ENCODE measurements at regions of chr16 and their contacts with region 1.

Region 1: DNA sequence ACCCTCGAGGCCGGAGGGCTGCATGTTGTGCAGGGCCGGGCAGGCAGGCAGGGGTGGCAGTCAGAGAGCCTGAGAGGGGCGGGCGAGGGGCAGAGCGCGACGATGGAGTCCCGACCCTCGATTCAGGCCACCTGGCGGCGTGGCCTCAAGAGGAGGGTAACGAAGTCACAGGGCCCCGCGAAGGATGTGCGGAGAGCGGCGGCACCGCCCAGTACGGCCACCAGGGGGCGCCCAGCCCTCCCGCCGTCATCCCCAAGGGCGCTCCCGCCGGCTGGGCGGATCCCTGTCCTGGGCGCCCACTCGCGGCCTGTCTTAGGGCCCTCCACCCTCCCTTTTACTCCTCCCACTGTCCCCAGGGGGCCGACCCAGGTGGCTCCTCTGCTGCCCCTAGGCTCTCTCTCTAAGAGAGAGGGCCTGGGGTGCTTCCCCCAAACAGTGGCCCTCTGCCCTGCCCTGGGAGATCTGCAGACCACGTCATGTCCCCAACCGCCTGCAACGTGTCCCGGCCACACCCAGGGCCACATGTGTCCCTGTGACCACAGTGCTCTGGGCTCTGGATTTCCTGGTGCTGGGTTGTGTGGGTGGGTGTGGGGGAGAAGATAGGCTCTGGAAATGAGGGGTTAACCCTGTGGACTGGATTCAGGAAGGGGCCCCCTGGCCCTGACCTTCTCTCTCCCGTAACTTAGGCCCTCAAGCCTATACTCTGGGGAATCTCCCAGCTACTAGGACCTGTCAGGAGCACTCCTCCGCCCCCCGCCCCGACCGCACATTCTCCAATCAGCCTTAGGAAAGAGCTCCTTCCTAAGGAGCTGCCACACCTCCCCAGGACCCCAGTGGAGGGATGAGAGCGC is 5.9 kb downstream of the DPEP2 start:
- DNase-seq: peak; percentile 69
- ATAC-seq: peak; percentile 89
- H3K4me3 ChIP-seq: peak overlapping the region; percentile 44 to 74 (median 67); a peak in 5 of 6 replicates
- H3K27ac ChIP-seq: peak overlapping the region; percentile 22
- H3K4me1 ChIP-seq: peaks cover 37% of the 10 kb centered on the region
- H3K27me3 ChIP-seq: peaks cover 2 to 22% of the 10 kb centered on the region in 2 experiments
- CTCF ChIP-seq: peak; percentile 98
- EP300 ChIP-seq: no peak
- POLR2A ChIP-seq: peak; percentile 25 to 40; a peak in 2 of 4 replicates
- RAD21 ChIP-seq: peak; percentile 97

Region 2: GRCh38 chr16:67800338-67800926 is 193.0 kb before region 1 on chr16:
- CTCF ChIA-PET with region 1: no interaction called
- POLR2A ChIA-PET with region 1: no interaction called
- in situ Hi-C with region 1: no loop called
- intact Hi-C with region 1: no loop called
- DNase-seq: no peak
- ATAC-seq: no peak
- H3K4me3 ChIP-seq: no peak overlapping the region
- H3K27ac ChIP-seq: no peak overlapping the region
- H3K4me1 ChIP-seq: peaks cover 33% of the 10 kb centered on the region
- H3K27me3 ChIP-seq: no peaks in the 10 kb centered on the region
- CTCF ChIP-seq: no peak
- EP300 ChIP-seq: no peak
- POLR2A ChIP-seq: no peak
- RAD21 ChIP-seq: no peak

Region 3: GRCh38 chr16:67929547-67929946 is 63.9 kb before region 1 on chr16:
- CTCF ChIA-PET with region 1: no interaction called
- POLR2A ChIA-PET with region 1: no interaction called
- in situ Hi-C with region 1: no loop called
- intact Hi-C with region 1: no loop called
- DNase-seq: no peak
- ATAC-seq: no peak
- H3K4me3 ChIP-seq: no peak overlapping the region
- H3K27ac ChIP-seq: no peak overlapping the region
- H3K4me1 ChIP-seq: peaks cover 11% of the 10 kb centered on the region
- H3K27me3 ChIP-seq: no peaks in the 10 kb centered on the region
- CTCF ChIP-seq: no peak
- EP300 ChIP-seq: no peak
- POLR2A ChIP-seq: no peak
- RAD21 ChIP-seq: no peak

Region 4: GRCh38 chr16:68022704-68023522 is 29.5 kb after region 1 on chr16 and contains the starts of genes DDX28 and DUS2:
- CTCF ChIA-PET with region 1: interaction called, 3 read pairs
- POLR2A ChIA-PET with region 1: interaction called, 13 read pairs
- in situ Hi-C with region 1: no loop called
- intact Hi-C with region 1: no loop called
- DNase-seq: peak; percentile 88
- ATAC-seq: peak; percentile 88
- H3K4me3 ChIP-seq: peak within 1 kb of the TSS; percentile 92 to 99 (median 92)
- H3K27ac ChIP-seq: peak within 1 kb of the TSS; percentile 83
- H3K4me1 ChIP-seq: peaks cover 24% of the 10 kb centered on the region
- H3K27me3 ChIP-seq: no peaks in the 10 kb centered on the region; a peak in 1 of 5 replicates
- CTCF ChIP-seq: peak; percentile 34; the same call in 1 of the 2 replicates
- EP300 ChIP-seq: peak; percentile 37 to 77; a peak in 2 of 4 replicates
- POLR2A ChIP-seq: peak; percentile 88 to 92
- RAD21 ChIP-seq: peak; percentile 38; the same call in 1 of the 2 replicates
- total RNA-seq, gene DDX28: 16.4 and 18.4 TPM in 2 replicates
- total RNA-seq, gene DUS2: 25.1 and 25.9 TPM in 2 replicates

Region 5: DNA sequence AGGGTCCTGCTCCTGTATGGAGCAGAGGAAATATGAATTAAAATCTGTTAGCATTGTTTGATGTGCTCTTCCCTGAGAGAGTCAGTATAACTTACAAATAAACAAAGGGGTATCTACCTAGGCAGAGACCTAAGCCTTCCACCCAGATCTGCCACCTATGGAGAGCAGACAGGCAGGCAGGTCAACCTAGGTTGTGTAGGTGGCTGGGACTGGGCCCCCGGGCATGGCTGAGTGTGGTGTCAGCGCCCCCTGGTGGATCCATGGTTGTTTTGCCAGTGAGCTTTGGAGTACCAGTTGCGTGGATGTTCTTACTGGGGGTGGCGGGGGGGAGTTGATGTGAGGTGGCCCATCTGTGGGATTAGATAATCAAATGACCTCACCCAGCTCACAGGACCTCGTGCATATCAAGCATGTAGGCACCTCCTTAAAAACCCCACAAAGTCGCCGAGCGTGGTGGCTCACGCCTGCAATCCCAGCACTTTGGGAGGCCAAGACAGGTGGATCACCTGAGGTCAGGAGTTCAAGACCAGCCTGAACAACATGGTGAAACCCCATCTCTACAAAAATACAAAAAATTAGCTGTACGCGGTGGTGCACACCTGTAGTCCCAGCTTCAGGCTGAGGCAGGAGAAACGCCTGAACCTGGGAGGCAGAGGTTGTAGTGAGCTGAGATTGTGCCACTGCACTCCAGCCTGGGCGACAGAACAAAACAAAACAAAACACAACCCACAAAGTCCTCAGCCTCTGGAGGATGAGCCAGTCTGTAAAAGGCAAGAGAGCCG is 47.3 kb after region 1 on chr16:
- CTCF ChIA-PET with region 1: interaction called, 46 read pairs
- POLR2A ChIA-PET with region 1: interaction called, 3 read pairs
- in situ Hi-C with region 1: loop called (anchors 5 kb)
- intact Hi-C with region 1: loop called (anchors 1 kb)
- DNase-seq: peak; percentile 82
- ATAC-seq: peak; percentile 99
- H3K4me3 ChIP-seq: no peak overlapping the region
- H3K27ac ChIP-seq: no peak overlapping the region
- H3K4me1 ChIP-seq: peaks cover 5% of the 10 kb centered on the region; the same call in 1 of the 2 replicates
- H3K27me3 ChIP-seq: no peaks in the 10 kb centered on the region
- CTCF ChIP-seq: peak; percentile 95
- EP300 ChIP-seq: no peak
- POLR2A ChIP-seq: no peak
- RAD21 ChIP-seq: peak; percentile 97

Region 6: DNA sequence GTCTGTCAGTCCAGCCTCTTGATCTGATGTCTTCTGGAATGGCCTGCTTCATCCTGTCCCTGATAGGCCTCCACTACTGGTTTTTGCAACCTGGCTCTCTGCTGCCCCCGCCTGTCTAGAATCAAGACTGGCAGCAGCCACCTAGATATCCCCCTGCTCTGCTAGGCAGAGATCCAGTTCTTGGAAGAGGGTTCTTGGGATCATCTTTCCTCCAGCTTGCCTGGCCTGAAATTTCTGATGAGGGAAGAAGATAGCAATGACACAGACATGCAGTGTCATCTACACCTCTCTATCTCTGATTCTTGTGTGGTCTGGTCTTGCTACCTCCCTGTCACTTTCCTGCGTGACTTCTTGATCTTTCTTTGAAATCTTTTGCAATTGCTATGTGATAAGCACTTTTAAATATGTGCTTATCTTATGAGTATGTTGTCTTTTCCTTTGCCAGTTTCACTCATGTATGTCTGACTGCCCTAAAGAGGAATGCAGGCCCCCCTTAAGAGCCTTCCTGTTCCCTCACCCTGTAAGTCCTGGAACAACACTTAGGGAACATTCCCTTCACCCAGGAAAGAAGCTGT is 71.5 kb after region 1 on chr16:
- CTCF ChIA-PET with region 1: interaction called, 14 read pairs
- POLR2A ChIA-PET with region 1: no interaction called
- in situ Hi-C with region 1: no loop called
- intact Hi-C with region 1: no loop called
- DNase-seq: peak; percentile 61
- ATAC-seq: peak; percentile 97
- H3K4me3 ChIP-seq: no peak overlapping the region
- H3K27ac ChIP-seq: no peak overlapping the region
- H3K4me1 ChIP-seq: no peaks in the 10 kb centered on the region
- H3K27me3 ChIP-seq: no peaks in the 10 kb centered on the region
- CTCF ChIP-seq: peak; percentile 94
- EP300 ChIP-seq: no peak
- POLR2A ChIP-seq: no peak
- RAD21 ChIP-seq: peak; percentile 86

Region 7: DNA sequence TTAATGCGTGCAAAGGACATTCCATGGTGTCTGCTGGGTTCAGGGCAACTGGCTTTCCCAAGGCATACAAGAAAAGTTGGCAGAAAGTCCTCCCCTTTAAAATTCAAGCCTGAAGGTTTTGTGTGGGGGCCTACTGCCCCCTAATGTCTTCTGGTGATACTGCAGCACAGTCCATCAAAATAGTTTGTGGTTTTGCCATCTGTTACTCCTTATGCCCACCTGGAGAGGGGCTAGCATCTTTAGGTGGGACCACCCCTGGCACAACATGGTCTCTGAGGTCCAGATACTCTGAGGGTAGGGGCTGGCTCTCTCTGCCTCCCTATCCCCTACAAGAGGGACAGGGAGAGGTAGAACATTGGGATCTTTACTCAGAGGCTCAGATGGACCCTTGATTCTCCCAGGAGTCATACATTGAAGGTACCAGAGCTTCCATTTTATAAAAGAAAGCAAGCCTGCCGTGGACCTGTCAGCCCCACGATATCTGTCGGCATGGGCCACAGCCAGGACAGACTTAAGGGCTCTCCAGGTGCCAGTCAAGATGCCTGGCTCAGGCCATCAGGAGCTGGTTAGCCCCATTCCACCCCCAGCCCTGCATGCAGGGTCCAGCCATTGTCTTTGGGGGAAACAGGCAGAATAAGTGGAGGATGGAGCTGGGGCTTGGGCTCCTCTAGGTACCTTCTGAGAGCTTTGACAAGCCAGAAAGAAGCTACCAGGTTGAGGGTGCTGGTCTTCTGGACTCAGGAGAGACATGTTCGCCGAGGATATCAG is 236.2 kb after region 1 on chr16:
- CTCF ChIA-PET with region 1: interaction called, 3 read pairs
- POLR2A ChIA-PET with region 1: no interaction called
- in situ Hi-C with region 1: no loop called
- intact Hi-C with region 1: loop called (anchors 2 kb)
- DNase-seq: peak; percentile 64
- ATAC-seq: peak; percentile 1; the same call in 1 of the 3 replicates
- H3K4me3 ChIP-seq: no peak overlapping the region
- H3K27ac ChIP-seq: no peak overlapping the region
- H3K4me1 ChIP-seq: peaks cover 38% of the 10 kb centered on the region
- H3K27me3 ChIP-seq: no peaks in the 10 kb centered on the region
- CTCF ChIP-seq: peak; percentile 80
- EP300 ChIP-seq: no peak
- POLR2A ChIP-seq: no peak; a peak in 1 of 4 replicates
- RAD21 ChIP-seq: peak; percentile 75